AG04450 (cell line): ENCODE measurements at regions of chr10 and their contacts with region 1.

Region 1: DNA sequence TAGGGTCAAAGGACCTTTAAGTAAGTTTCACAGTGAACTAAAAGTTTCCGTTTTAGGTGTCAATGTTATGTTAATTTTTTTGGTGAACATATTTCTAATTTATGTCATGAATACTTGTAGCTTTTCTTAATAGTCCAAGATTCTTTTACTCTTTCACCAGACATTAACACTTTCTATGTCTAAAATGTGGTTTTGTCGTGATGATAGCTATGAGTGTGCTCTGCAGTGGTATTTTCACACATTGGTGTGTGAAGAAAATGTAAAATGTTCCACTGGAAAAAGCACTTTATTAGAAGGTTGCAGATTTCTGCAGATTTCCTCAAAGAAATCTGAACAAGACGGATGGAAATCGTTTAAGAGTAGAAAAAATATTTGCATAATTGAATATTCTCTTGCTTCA is 561.0 kb upstream of the ANKRD30A start:
- DNase-seq: no peak
- H3K4me3 ChIP-seq: no peak overlapping the region
- H3K27ac ChIP-seq: no peak overlapping the region
- H3K27me3 ChIP-seq: no peaks in the 10 kb centered on the region
- CTCF ChIP-seq: no peak

Region 2: GRCh38 chr10:35690534-35690933 is 873.9 kb before region 1 on chr10:
- CTCF ChIA-PET with region 1: no interaction called
- POLR2A ChIA-PET with region 1: interaction called, 16 read pairs
- DNase-seq: no peak
- H3K4me3 ChIP-seq: no peak overlapping the region
- H3K27ac ChIP-seq: no peak overlapping the region
- H3K27me3 ChIP-seq: peaks cover 31% of the 10 kb centered on the region
- CTCF ChIP-seq: no peak